Activated CD4-positive, alpha-beta T cell treated with anti-CD3 and anti-CD28 coated beads, Interleukin-2, amount 10 ng/mL, durations not matched to agents 24 days and 14 days (primary cell): ENCODE measurements at regions of chr14 and their contacts with region 1.

Region 1: DNA sequence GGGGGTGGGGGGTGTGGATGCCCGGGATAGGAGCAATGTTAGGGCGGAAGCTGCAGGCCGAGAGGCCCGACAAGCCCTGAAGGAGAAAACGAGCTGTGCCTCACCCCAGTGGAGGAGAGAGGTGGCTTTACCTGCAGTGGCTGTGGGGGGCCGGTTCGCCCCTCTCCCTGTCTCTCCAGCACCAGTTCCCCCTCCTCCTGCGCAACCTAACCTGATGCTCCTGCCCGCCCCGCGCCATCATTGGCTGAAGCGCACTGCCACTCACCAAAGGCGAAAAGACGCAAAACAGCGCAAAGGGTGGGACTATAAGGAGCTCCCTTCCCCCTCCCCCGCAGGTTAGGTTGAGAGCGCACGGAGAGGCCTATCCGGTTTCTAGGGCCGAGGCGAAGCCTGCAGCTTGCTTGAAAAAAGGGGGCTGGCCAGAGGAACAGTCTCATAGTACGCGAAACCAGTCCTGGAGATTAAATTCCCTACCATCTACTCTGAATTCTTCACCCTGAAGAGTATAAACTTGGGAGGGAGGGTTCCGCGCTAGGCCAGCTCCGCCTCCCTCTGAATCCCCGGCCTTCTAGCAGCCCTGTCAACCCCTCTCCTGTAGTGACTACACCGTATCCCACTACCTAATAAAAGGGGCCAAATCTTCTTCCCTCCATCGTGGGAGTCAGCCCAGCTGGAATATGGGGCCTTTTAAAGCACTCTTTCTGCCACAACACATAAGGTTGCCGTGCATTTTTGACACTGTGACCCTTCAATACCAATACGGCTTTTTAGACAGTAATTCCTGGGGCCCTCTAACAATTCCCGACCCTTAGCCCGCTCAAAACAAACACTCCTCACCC is 18.6 kb downstream of the CHD8 start:
- DNase-seq: peak; percentile 100
- H3K4me3 Mint-ChIP-seq: peak overlapping the region; percentile 90
- H3K27ac Mint-ChIP-seq: peak overlapping the region; percentile 77
- H3K4me1 Mint-ChIP-seq: peaks cover 50% of the 10 kb centered on the region
- H3K27me3 Mint-ChIP-seq: no peaks in the 10 kb centered on the region

Region 2: GRCh38 chr14:20836668-20837338 is 600.5 kb before region 1 on chr14:
- intact Hi-C with region 1: no loop called
- DNase-seq: no peak
- H3K4me3 Mint-ChIP-seq: no peak overlapping the region
- H3K27ac Mint-ChIP-seq: no peak overlapping the region
- H3K4me1 Mint-ChIP-seq: no peaks in the 10 kb centered on the region
- H3K27me3 Mint-ChIP-seq: no peaks in the 10 kb centered on the region

Region 3: GRCh38 chr14:21369949-21370679 is 67.2 kb before region 1 on chr14:
- intact Hi-C with region 1: no loop called
- DNase-seq: no peak
- H3K4me3 Mint-ChIP-seq: no peak overlapping the region
- H3K27ac Mint-ChIP-seq: no peak overlapping the region
- H3K4me1 Mint-ChIP-seq: peaks cover 7% of the 10 kb centered on the region
- H3K27me3 Mint-ChIP-seq: no peaks in the 10 kb centered on the region

Region 4: DNA sequence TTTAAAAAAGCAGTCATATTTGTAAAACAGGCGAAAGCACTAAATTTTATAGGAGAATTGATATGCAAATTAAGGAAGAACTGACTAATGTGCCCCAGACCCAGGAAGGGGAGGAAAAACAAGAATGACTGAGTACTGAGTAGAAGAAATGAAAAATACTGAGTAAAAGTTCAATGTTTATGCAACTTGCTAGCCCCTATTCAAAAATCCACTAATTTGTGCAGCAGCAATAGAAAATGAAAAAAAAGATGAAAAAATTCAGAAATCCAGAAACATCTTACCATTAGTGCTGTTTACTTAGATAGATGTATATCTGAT is 12.6 kb after region 1 on chr14:
- intact Hi-C with region 1: loop called (anchors 1 kb)
- DNase-seq: no peak
- H3K4me3 Mint-ChIP-seq: peak overlapping the region; percentile 59
- H3K27ac Mint-ChIP-seq: peak overlapping the region; percentile 84
- H3K4me1 Mint-ChIP-seq: peaks cover 44% of the 10 kb centered on the region
- H3K27me3 Mint-ChIP-seq: no peaks in the 10 kb centered on the region